ENCODE measurements at regions of chr11 and their contacts with region 1.

Region 1: DNA sequence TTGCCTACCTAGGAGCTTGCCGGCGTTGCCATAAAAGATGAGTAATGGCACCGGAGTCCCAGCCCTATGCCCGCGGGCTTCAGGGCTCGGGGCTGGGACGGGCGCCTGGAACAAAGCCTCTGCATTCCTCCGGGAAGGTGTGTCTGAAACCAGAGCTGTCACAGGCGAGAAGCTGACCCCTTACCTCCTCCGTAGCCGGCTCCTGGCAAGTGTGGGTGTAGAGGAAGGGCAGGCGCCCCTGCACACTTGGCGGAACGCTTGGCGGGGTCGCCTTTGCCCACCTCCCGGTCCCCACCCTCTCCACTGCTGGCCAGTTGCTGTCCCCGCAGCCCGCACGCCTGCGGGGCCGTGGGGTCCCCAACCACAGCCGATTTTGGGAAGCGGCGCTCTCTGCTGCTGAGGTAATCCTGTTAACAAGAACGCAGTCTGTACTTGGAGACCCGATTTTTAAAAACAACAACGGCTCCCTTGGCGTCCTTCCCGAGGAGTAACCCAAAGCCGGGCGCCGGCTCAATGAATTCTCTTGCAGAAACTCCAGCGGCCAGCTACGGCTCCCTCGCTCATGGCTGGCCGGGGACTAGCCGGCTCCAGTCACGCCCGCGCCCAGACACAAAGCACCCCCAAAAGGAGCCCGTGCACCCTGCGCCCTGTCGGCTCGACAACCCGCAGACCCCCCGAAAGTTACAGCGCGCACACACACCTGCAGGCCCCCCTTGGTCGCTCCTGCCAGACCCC is 89.2 kb downstream of the PLEKHA7 start:
- DNase-seq: peak; percentile 86 to 87
- H3K4me3 ChIP-seq: peak overlapping the region; percentile 61
- H3K27ac ChIP-seq: peak overlapping the region; percentile 91
- H3K4me1 ChIP-seq: peaks cover 62% of the 10 kb centered on the region
- H3K27me3 ChIP-seq: no peaks in the 10 kb centered on the region
- CTCF ChIP-seq: no peak

Region 2: GRCh38 chr11:16881074-16881709 is 43.8 kb before region 1 on chr11:
- CTCF ChIA-PET with region 1: no interaction called
- POLR2A ChIA-PET with region 1: interaction called, 4 read pairs
- intact Hi-C with region 1: loop called (anchors 2 kb)
- DNase-seq: peak; percentile 53 to 54
- H3K4me3 ChIP-seq: no peak overlapping the region
- H3K27ac ChIP-seq: peak overlapping the region; percentile 23; the same call in 1 of the 2 replicates
- H3K4me1 ChIP-seq: peaks cover 37% of the 10 kb centered on the region
- H3K27me3 ChIP-seq: no peaks in the 10 kb centered on the region
- CTCF ChIP-seq: peak; percentile 23; the same call in 1 of the 2 replicates

Region 3: GRCh38 chr11:16891964-16892363 is 33.0 kb before region 1 on chr11:
- CTCF ChIA-PET with region 1: no interaction called
- POLR2A ChIA-PET with region 1: no interaction called
- intact Hi-C with region 1: loop called (anchors 2 kb)
- DNase-seq: peak in 1 of 2 experiments; percentile 63
- H3K4me3 ChIP-seq: no peak overlapping the region
- H3K27ac ChIP-seq: peak overlapping the region; percentile 62
- H3K4me1 ChIP-seq: peaks cover 61% of the 10 kb centered on the region
- H3K27me3 ChIP-seq: no peaks in the 10 kb centered on the region
- CTCF ChIP-seq: no peak

Region 4: DNA sequence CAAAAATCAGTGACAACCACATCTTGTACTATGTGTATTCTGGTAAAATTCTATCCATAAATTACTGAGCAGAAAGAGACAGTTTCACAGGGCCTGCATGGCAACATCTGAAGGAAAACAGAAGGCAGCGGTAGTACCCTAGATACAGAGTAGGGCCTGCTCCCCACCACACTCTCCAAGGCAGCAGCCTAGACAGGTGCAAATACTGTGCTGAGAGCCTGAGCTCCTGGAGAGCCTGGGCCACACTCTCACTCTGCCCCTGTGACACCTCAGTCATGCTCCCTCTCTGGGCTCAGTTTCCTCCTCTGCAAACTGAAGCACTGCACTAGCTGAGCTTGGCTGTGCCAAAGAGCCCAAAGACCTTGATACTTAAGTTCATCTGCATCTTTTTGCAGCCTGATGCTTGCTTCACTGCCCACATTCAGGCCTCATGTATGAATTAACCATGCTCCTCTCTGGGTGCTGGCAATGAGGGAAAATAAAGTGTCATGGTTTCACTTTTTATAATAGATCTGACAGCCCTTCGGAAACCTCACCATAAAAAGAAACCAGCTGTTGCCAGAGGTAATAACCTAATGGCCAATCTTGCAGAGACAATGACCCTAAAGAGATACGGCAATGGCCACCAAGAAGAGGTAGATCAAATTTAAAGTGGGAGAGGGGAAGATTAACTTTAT is 15.5 kb before region 1 on chr11:
- CTCF ChIA-PET with region 1: no interaction called
- POLR2A ChIA-PET with region 1: no interaction called
- intact Hi-C with region 1: no loop called
- DNase-seq: no peak
- H3K4me3 ChIP-seq: no peak overlapping the region
- H3K27ac ChIP-seq: no peak overlapping the region
- H3K4me1 ChIP-seq: peaks cover 33% of the 10 kb centered on the region
- H3K27me3 ChIP-seq: no peaks in the 10 kb centered on the region
- CTCF ChIP-seq: no peak

Region 5: DNA sequence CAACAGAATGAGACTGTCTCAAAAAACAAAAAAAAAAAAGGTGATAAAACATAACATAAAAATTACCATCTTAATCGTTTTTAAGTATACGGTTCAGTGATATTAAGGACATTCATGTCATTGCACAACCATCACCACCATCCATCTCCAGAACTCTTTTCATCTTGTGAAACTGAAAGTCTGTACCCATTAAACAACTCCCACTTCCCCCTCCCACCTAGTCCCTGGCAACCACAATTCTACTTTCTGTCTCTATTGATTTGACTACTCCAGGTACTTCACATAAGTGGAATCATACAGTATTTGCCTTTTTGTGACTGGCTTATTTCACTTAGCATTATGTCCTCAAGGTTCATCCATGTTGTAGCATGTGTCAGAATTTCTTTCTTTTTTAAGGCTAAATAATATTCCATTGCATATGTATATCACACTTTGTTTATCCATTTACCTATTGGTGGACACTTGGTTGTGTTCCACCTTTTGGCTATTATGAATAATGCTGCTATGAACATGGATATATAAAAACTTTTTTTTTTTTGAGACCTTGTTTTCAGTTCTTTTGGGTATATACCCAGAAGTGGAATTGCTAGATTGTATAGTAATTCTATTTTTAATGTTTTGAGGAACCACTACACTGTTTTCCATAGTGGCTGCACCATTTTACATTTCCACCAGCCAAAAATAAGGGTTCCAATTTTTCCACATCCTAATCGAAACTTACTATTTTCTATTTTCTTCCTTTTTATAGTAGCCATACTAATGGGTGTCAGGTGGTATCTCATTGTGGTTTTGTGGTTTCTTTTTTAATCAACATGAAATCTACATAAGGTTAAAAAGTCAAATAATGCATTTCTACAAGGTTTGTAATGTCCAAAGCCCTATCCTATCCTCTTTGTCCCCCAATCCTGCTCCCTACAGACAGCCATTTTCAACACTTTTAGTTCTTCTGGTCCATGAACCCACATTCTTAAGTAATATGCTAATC is 306.2 kb after region 1 on chr11:
- CTCF ChIA-PET with region 1: no interaction called
- POLR2A ChIA-PET with region 1: no interaction called
- intact Hi-C with region 1: no loop called
- DNase-seq: no peak
- H3K4me3 ChIP-seq: no peak overlapping the region
- H3K27ac ChIP-seq: no peak overlapping the region
- H3K4me1 ChIP-seq: no peaks in the 10 kb centered on the region
- H3K27me3 ChIP-seq: no peaks in the 10 kb centered on the region
- CTCF ChIP-seq: no peak